ENCODE measurements at regions of chr15 and their contacts with region 1.

Region 1: GRCh38 chr15:62389885-62390790 is 225.1 kb upstream of the C2CD4B start:
- DNase-seq: no peak
- H3K4me3 ChIP-seq: peak within 1 kb of the TSS; percentile 85 to 93 (median 92)
- H3K27ac ChIP-seq: peak within 1 kb of the TSS; percentile 84 to 91 (median 88)
- H3K4me1 ChIP-seq: peaks cover 8 to 23% (median 20%) of the 10 kb centered on the region in 4 donors
- H3K27me3 ChIP-seq: no peaks in the 10 kb centered on the region
- CTCF ChIP-seq: peak in 1 of 3 experiments; percentile 4
- EP300 ChIP-seq: no peak
- POLR2A ChIP-seq: peak; percentile 54

Region 2: DNA sequence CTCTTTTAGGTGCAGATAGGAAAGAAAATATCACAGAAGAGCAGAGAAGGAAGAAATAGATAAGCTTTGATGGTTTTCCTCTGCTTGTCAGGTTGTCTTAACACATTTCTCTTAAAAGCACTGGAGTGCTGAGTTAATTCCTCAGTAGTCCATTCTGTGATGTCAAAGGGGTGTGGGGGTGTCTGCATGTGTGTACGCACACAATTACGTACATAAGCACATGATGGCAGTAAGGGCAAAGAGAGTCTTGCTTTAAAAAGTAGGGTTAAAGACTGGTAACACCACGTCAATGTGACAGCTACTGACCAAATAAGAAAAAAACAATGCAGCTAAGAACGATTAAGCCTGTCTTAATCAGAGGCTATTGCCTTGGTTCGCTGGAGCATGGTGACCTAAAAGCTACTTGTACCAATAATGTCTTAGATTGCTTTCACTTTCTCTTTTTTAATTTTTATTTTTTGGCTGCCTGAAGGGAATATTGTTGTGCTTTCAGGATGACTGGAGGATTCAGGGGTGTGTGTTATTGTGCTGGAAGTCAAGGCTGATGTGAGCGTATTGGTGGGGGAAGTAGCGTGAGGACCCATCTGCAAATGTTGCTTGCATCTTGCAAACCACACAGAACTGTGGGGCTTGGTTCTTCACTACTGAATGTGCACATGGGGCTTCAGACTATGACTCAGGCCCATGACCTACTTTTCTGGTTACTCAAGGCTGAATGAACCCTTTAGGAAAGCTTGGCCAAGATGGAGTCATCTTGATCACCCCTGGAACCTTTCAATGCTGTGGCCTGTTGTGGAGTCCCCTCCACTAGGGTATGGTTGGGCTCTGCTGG is 234.6 kb after region 1 on chr15:
- intact Hi-C with region 1: no loop called
- DNase-seq: no peak
- H3K4me3 ChIP-seq: peak overlapping the region in 2 of 4 donors; percentile 22 to 23
- H3K27ac ChIP-seq: peak overlapping the region in 1 of 4 donors; percentile 12
- H3K4me1 ChIP-seq: peaks cover 0 to 7% (median 4%) of the 10 kb centered on the region in 4 donors
- H3K27me3 ChIP-seq: no peaks in the 10 kb centered on the region
- CTCF ChIP-seq: no peak
- EP300 ChIP-seq: no peak
- POLR2A ChIP-seq: no peak

Region 3: DNA sequence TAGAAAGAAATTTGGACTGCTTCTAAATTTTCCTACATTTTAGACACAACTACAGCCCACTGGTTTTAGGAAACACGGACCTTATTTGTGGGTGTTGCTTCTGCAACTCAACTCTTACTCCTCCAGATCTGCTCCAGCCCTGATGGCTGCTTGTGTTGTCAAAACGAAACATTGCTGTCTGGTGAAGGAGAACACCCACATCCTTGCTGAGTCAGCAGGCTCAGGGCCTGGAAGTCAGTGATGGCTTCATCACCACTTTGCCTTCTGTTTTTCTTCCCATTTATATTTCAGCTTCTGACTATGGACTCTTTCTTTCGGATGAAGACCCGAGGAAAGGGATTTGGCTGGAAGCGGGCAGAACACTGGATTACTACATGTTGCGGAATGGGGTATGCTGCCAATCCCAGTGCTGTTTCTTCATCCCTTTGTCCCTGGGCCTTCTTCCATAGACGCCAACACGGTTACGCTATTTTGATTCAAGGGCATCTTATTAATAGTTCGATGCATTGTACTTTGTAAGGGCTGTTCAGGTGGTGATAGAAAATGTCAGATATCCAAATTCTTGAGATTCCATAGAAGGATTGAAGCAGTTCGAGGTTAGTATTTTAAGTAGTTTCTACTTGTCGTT is 259.8 kb after region 1 on chr15:
- intact Hi-C with region 1: loop called (anchors 5 kb)
- DNase-seq: peak; percentile 74
- H3K4me3 ChIP-seq: no peak overlapping the region
- H3K27ac ChIP-seq: no peak overlapping the region
- H3K4me1 ChIP-seq: peaks cover 0 to 4% (median 2%) of the 10 kb centered on the region in 4 donors
- H3K27me3 ChIP-seq: no peaks in the 10 kb centered on the region
- CTCF ChIP-seq: no peak
- EP300 ChIP-seq: no peak
- POLR2A ChIP-seq: no peak

Region 4: DNA sequence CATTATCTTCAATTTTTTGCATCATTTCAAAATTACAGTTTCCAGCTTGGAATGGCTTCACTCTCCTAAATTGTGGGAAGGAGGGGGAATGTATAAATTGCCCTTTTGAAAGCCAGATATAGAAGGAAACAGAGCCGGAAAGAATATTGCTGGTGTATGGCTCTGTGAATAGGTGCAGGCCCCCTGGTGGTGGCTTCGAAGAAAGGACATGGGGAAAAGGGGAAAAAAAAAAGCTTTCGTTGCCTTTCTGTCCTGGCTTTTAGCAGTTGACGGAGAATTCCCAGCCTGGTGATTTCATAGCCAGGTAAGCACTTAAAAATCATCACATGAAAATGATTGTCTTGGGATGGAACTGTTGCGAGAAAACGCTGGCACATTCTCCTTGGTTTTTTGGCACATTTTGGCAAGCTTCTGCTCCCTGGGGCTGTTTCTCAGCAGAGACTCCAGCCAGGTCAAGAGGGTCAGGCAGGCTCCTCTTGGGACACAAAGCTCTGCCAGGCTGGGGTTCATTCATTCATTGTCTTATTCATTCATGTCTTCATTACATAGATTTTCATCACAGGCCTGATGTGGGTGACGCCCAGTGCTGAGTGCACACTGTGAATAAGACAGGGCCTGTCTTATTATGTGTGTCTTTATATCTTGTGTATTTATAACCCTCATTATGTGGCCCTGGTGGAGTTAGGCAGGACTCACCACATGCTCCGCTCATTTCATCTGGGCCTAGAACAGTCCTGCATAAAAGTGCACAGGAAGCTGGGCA is 352.5 kb after region 1 on chr15:
- intact Hi-C with region 1: loop called (anchors 5 kb)
- DNase-seq: peak; percentile 93
- H3K4me3 ChIP-seq: no peak overlapping the region
- H3K27ac ChIP-seq: peak overlapping the region; percentile 58 to 82 (median 69)
- H3K4me1 ChIP-seq: peaks cover 5 to 34% (median 28%) of the 10 kb centered on the region in 4 donors
- H3K27me3 ChIP-seq: no peaks in the 10 kb centered on the region
- CTCF ChIP-seq: peak; percentile 71 to 79 (median 75)
- EP300 ChIP-seq: no peak
- POLR2A ChIP-seq: no peak